Activated naive CD8-positive, alpha-beta T cell treated with anti-CD3 and anti-CD28 coated beads, Interleukin-2, amount 10 ng/mL, durations not matched to agents 7 days and 5 days (primary cell): ENCODE measurements at regions of chr2 and their contacts with region 1.

Region 1: DNA sequence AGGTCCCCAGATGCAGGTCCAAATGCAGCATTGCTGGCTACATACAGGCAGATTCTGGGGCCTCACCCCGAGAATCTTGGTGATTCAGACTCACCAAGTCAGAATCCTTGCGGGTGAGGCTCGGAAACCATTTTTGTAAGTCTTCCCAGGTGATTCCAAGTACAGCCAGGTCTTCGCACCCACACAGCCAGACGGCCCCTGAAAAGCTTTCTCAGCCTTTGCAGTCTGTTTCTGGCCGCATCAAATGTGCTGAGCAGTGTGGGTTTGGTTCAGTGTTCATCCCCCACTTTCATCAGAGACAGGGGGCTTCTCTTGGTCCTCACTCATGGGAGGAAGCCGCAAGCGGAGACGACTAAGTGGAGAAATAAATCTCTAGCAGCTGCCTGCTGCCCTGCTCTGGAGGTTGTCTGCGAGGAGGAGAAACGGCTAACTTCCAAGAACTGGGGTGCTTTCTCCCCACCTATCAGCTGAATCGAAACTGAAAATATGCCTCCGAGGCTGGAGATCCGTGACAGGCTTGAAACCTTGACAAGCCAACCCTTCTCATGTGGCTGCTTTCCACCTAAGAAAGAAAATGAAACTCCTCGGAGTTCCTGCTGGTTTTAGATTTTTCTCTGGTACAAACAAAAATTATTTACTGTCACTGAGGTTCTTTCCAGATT is 8.9 kb upstream of the TMEM185B start:
- DNase-seq: peak; percentile 72
- ATAC-seq: peak; percentile 93
- H3K4me3 Mint-ChIP-seq: peak overlapping the region; percentile 99
- H3K27ac Mint-ChIP-seq: peak overlapping the region; percentile 99
- H3K4me1 Mint-ChIP-seq: peaks cover 40% of the 10 kb centered on the region
- H3K27me3 Mint-ChIP-seq: no peaks in the 10 kb centered on the region

Region 2: GRCh38 chr2:120246546-120247300 is 14.6 kb after region 1 on chr2:
- POLR2A ChIA-PET with region 1: interaction called, 44 read pairs
- DNase-seq: no peak
- ATAC-seq: no peak
- H3K4me3 Mint-ChIP-seq: peak overlapping the region; percentile 58
- H3K27ac Mint-ChIP-seq: no peak overlapping the region
- H3K4me1 Mint-ChIP-seq: peaks cover 19% of the 10 kb centered on the region
- H3K27me3 Mint-ChIP-seq: peaks cover 26% of the 10 kb centered on the region

Region 3: GRCh38 chr2:120252225-120253021 is 20.3 kb after region 1 on chr2 and contains the start of gene RALB:
- POLR2A ChIA-PET with region 1: interaction called, 44 read pairs
- DNase-seq: peak; percentile 98
- ATAC-seq: peak; percentile 95
- H3K4me3 Mint-ChIP-seq: peak within 1 kb of the TSS; percentile 98
- H3K27ac Mint-ChIP-seq: peak within 1 kb of the TSS; percentile 94
- H3K4me1 Mint-ChIP-seq: peaks cover 47% of the 10 kb centered on the region
- H3K27me3 Mint-ChIP-seq: peaks cover 21% of the 10 kb centered on the region
- total RNA-seq, gene RALB: 45.7 to 50.4 TPM

Region 4: GRCh38 chr2:120312861-120313694 is 81.0 kb after region 1 on chr2:
- POLR2A ChIA-PET with region 1: interaction called, 46 read pairs
- DNase-seq: peak; percentile 81
- ATAC-seq: peak; percentile 73
- H3K4me3 Mint-ChIP-seq: peak overlapping the region; percentile 80
- H3K27ac Mint-ChIP-seq: peak overlapping the region; percentile 80
- H3K4me1 Mint-ChIP-seq: peaks cover 32% of the 10 kb centered on the region
- H3K27me3 Mint-ChIP-seq: no peaks in the 10 kb centered on the region